ENCODE measurements at regions of chr11 and their contacts with region 1.

Region 1: GRCh38 chr11:44133335-44133946 is 38.0 kb downstream of the EXT2 start:
- DNase-seq: peak; percentile 91
- H3K4me3 ChIP-seq: no peak overlapping the region
- H3K27ac ChIP-seq: peak overlapping the region; percentile 49
- H3K4me1 ChIP-seq: peaks cover 68% of the 10 kb centered on the region
- H3K27me3 ChIP-seq: no peaks in the 10 kb centered on the region
- CTCF ChIP-seq: peak; percentile 99

Region 2: DNA sequence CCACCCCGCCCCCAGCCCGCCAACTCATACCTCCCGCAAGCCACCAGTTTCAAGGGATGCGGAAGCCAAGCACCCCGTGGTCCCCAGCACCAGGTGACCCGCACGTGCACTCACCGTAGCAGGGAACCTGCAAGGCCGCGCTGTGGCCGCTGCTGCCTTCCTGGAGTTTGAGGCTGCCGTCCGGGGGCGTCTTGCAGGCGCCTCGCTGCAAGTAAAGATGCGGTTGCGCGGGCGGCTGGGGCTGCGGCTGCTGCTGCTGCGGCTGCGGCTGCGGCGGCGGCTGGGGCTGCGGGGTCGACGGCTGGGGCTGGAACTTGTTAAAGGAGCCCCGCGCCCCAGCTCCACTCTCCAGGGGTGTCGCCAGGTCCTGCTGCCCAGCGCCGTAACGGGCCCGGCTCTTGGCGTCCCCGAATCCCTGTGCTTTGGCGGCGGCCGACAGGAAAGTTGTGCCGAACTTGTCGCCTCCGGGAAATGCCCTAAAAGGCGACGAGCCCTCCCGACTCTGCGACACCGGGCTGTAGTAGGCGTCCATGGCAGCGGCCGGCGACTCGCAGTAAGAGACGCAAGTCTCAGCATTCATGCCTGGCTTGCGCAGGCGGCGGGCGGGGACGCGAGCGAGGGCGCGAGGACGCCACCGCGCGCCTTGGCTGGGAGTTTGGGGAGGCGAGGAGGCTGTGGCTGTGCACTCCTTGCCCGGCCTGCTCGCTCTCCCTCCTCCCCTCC is 176.2 kb after region 1 on chr11 and contains the start of gene ALX4:
- CTCF ChIA-PET with region 1: interaction called, 14 read pairs
- POLR2A ChIA-PET with region 1: no interaction called
- intact Hi-C with region 1: loop called (anchors 1 kb)
- DNase-seq: peak; percentile 98
- H3K4me3 ChIP-seq: peak within 1 kb of the TSS; percentile 78
- H3K27ac ChIP-seq: peak within 1 kb of the TSS; percentile 92
- H3K4me1 ChIP-seq: peaks cover 35% of the 10 kb centered on the region
- H3K27me3 ChIP-seq: no peaks in the 10 kb centered on the region
- CTCF ChIP-seq: peak; percentile 40
- total RNA-seq, gene ALX4: 135 TPM in 2 replicates

Region 3: DNA sequence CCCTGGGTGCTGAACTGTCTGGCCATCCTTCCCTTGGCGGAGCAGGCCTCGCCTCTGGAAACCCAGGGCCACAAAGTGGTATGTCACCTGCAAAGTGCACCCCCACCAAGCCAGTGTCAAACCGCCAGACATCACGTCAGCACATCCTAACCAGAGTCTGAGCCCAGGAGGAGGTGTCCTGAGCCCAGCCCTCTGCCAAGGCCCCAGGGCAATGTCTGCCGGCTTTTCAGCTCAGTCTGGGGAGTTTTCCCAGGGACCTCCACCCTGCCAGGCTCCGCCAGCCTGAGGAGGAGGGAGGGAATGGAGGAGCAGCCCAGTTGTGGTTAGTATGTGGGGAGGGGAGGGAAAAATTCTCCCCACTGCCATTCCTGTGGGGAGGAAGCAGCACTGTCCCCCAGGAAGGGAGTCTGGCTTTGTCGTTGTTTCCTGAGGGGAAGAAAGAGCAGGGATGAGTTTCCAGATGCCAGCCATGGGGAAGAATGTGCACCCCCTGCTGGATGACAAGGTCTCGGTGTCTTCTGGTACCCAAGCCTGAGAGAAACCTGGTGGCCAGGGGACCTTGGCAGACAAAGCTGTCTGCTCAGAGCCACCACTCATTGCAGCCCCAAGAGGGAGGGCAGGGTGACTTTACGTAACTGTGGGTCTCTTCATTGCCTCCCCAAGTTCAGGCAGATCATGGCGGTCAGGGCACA is 350.6 kb after region 1 on chr11:
- CTCF ChIA-PET with region 1: interaction called, 10 read pairs
- POLR2A ChIA-PET with region 1: no interaction called
- intact Hi-C with region 1: loop called (anchors 1 kb)
- DNase-seq: peak; percentile 79
- H3K4me3 ChIP-seq: no peak overlapping the region
- H3K27ac ChIP-seq: no peak overlapping the region
- H3K4me1 ChIP-seq: no peaks in the 10 kb centered on the region
- H3K27me3 ChIP-seq: no peaks in the 10 kb centered on the region
- CTCF ChIP-seq: peak; percentile 84

Measured in A673 (cell line).